ENCODE measurements at regions of chr5 and their contacts with region 1.

Region 1: GRCh38 chr5:64680289-64680688 is 10.0 kb upstream of the SHISAL2B start:
- DNase-seq: no peak
- H3K4me3 ChIP-seq: no peak overlapping the region
- H3K27ac ChIP-seq: no peak overlapping the region
- H3K4me1 ChIP-seq: no peaks in the 10 kb centered on the region; a peak in 1 of 7 replicates
- H3K27me3 ChIP-seq: no peaks in the 10 kb centered on the region
- CTCF ChIP-seq: peak; percentile 49 to 64 (median 53)
- EP300 ChIP-seq: no peak
- POLR2A ChIP-seq: no peak
- RAD21 ChIP-seq: peak; percentile 39 to 63

Region 2: DNA sequence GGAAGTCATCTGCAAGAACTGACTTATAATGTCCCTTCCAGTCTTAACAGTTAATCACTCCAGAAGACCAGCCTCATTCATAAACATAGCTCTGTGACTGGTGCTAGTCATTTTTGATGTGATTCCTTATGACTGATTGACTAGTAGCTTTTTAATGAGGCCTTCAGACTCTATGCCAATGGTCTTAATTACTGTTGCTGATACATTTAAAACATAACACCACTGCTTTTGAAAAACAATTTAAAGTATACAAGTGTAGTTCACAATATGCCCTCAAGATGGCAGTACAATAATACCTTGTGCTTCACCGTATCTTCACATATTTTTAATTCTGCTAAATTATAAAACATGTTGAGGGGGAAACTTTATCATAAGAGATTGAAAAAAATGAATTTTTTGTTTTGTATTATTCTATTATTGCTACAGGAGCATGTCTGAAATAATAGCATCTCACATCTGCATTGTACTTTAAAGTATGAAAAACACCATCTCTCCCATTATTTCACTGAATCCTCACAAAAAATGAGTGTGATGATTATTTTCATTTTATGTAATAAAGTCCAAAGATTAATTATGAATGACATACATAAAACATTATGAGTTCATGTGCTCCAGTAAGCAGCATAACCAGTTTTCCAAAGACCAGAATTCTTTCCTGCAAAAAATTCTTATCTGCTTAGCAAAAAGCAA is 45.1 kb before region 1 on chr5:
- CTCF ChIA-PET with region 1: interaction called, 76 read pairs
- POLR2A ChIA-PET with region 1: interaction called, 3 read pairs
- DNase-seq: no peak
- H3K4me3 ChIP-seq: no peak overlapping the region
- H3K27ac ChIP-seq: no peak overlapping the region
- H3K4me1 ChIP-seq: peaks cover 0 to 3% (median 1%) of the 10 kb centered on the region in 4 experiments; a peak in 3 of 7 replicates
- H3K27me3 ChIP-seq: no peaks in the 10 kb centered on the region
- CTCF ChIP-seq: peak in 2 of 3 experiments; percentile 41 to 49; a peak in 2 of 4 replicates
- EP300 ChIP-seq: no peak
- POLR2A ChIP-seq: no peak
- RAD21 ChIP-seq: peak; percentile 66 to 86

Region 3: DNA sequence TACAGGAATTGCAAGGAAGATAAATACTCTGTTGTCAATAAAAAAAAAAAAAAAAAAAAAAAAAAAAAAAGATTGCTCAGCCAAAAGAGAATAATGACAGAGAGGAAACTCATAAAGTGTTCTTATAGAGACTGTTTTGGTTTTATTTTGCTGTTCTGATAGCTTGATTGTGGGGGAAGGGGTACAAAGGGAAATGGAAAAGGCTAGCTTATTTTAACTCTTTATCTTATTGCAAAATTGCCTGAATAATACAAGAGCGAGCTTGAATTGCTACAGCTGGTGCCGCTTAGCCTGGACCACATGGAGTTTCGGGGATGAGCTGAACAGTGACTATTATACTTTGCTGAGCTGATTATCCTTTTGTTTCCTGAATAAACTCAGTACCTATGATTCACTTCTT is 21.0 kb before region 1 on chr5:
- CTCF ChIA-PET with region 1: interaction called, 48 read pairs
- POLR2A ChIA-PET with region 1: no interaction called
- DNase-seq: no peak
- H3K4me3 ChIP-seq: no peak overlapping the region
- H3K27ac ChIP-seq: no peak overlapping the region
- H3K4me1 ChIP-seq: no peaks in the 10 kb centered on the region
- H3K27me3 ChIP-seq: no peaks in the 10 kb centered on the region
- CTCF ChIP-seq: no peak
- EP300 ChIP-seq: no peak
- POLR2A ChIP-seq: no peak
- RAD21 ChIP-seq: no peak

Region 4: DNA sequence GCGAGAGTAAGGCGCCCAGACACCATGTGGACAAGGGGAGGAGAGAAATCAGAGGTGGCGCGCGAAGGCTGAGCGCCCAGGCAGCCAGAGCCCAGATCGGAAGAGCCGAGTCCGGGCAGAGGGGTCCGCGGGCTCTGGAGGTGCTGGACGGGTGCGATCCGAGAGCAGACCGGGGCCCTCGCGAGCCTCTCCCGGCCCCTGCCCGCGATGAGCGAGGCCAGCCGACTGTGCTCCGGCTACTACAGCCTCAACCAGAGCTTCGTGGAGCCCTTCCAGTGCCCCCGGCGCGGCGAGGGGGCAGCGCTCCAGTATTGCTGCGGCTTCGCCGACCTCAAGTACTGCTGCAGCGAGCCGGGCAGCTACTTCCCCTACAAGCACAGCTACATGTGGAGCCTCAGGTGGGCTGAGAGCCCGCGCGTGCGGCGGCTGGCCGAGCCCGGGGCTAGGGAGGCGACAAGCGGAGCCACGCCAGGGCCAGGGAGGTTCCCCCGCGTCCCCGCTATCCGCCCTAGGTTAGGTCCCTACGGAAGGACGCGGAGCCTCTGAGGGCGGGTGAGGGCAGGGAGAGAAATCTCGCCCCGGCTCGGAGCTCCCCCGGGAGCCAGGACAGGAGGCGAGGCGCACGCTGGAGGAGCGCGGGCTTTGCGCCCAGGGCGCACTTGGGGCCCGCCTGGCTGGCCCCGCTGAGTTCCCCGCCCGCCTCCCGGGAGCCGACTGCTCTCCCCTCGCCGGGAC is 10.3 kb after region 1 on chr5 and contains the start of gene SHISAL2B:
- CTCF ChIA-PET with region 1: interaction called, 20 read pairs
- POLR2A ChIA-PET with region 1: interaction called, 19 read pairs
- DNase-seq: peak in 1 of 2 experiments; percentile 87
- H3K4me3 ChIP-seq: peak within 1 kb of the TSS; percentile 46 to 65 (median 54)
- H3K27ac ChIP-seq: peak within 1 kb of the TSS; percentile 20; the same call in 1 of the 2 replicates
- H3K4me1 ChIP-seq: peaks cover 1 to 10% (median 6%) of the 10 kb centered on the region in 4 experiments
- H3K27me3 ChIP-seq: peaks cover 0 to 11% (median 8%) of the 10 kb centered on the region in 4 experiments; a peak in 6 of 7 replicates
- CTCF ChIP-seq: no peak
- EP300 ChIP-seq: no peak
- POLR2A ChIP-seq: peak; percentile 75 to 85
- RAD21 ChIP-seq: no peak
- total RNA-seq, gene SHISAL2B: 8.6 and 10.6 TPM in 2 replicates

Region 5: DNA sequence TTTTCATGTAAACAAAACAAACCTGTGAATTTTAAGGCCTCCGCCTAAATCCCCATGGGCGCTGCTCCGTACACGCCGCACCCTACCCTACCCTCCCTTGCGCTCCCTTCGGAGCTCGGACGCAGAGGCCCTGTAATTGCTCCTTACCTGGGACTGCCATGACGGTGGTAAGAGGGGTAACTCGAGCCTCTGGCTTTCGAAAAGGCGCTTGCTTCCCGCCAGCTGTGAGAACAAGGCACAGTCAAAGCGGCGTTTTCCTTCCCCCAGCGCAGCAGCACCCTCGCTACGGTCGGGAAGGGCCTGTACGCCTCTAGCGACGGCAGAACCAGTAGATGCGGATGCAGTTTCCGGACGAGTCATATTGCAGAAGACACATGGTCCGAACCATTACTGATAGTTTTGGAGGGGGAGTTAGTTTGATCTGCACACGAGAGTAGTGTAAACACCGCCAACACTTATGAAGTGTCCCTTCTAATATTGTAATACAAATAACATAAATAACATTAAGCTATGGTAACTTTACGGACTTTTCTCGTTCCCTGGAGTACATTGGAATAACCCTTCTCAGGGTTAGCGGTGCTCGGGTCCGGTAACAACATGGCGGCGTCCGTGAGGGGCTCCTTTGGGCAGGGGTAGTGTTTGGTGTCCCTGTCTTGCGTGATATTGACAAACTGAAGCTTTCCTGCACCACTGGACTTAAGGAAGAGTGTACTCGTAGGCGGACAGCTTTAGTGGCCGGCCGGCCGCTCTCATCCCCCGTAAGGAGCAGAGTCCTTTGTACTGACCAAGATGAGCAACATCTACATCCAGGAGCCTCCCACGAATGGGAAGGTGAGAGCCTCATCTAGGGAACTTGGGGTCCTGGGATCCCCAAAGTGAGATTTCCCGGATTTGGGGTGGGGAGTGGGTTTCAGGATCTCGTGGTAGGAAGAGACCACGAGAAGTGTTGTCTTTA is 88.3 kb after region 1 on chr5 and contains the starts of genes CWC27 and SREK1IP1:
- CTCF ChIA-PET with region 1: interaction called, 13 read pairs
- POLR2A ChIA-PET with region 1: no interaction called
- DNase-seq: peak; percentile 69 to 85
- H3K4me3 ChIP-seq: peak within 1 kb of the TSS; percentile 79 to 100 (median 98)
- H3K27ac ChIP-seq: peak within 1 kb of the TSS; percentile 97
- H3K4me1 ChIP-seq: peaks cover 0 to 9% (median 3%) of the 10 kb centered on the region in 4 experiments; a peak in 4 of 7 replicates
- H3K27me3 ChIP-seq: no peaks in the 10 kb centered on the region
- CTCF ChIP-seq: peak in 1 of 3 experiments; percentile 6; a peak in 1 of 4 replicates
- EP300 ChIP-seq: peak in 1 of 2 experiments; percentile 95; a peak in 2 of 3 replicates
- POLR2A ChIP-seq: peak; percentile 85 to 95
- RAD21 ChIP-seq: peak; percentile 15 to 28; a peak in 2 of 4 replicates
- total RNA-seq, gene CWC27: 41.1 and 43.4 TPM in 2 replicates
- total RNA-seq, gene SREK1IP1: 37.2 and 39.0 TPM in 2 replicates

Measured in H1 (cell line).